ENCODE measurements at regions of chr14 and their contacts with region 1.

Region 1: DNA sequence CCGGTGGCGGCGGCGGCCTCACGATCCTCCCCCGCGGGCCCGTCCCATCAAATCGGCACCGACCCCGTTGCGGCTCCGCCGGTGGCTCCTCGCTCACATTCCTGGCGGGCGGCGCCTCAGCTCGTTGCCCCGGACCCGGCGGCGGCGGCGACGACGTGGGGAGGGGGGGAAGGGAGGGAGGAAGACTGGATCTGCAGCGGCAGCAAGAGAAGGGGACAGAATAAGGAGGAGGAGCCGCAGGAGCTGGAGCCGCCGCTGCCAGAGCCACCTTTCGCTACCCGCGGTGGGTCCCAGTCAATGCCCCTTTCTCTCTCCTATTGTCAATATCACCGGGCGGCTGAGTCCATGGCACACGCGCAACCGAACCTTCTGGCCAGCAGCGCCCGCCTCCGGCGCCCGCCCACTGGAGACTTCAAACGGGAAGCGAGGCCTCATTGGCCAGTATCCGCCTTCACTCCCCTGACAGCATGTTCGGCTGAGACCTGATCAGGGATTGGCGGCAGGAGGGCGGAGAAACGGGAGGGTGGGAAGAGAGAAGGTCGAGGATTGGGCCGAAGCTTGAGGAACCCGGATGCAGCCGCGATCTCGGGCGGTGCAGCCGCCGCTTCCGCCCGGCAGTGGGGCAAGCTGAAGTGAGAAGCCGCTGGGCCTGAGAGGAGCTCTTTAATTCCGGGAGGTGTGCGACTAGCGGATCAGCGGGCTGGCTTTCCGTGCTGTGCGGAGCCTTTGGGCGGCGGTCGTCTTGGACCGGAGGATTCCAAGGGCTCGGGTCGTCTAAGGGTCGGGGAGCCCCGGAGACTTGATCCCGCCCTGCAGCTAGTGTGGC is at the start of gene PPP2R5E:
- DNase-seq: peak; percentile 95 to 99 (median 97)
- ATAC-seq: peak; percentile 96
- H3K4me3 ChIP-seq: peak within 1 kb of the TSS; percentile 75 to 98
- H3K4me3 Mint-ChIP-seq: peak within 1 kb of the TSS; percentile 98
- H3K27ac ChIP-seq: peak within 1 kb of the TSS; percentile 71 to 91
- H3K27ac Mint-ChIP-seq: peak within 1 kb of the TSS; percentile 93
- H3K4me1 ChIP-seq: peaks cover 17% of the 10 kb centered on the region
- H3K4me1 Mint-ChIP-seq: peaks cover 33% of the 10 kb centered on the region
- H3K27me3 ChIP-seq: no peaks in the 10 kb centered on the region
- H3K27me3 Mint-ChIP-seq: no peaks in the 10 kb centered on the region
- CTCF ChIP-seq: no peak
- total RNA-seq, gene PPP2R5E: 33.5 to 35.9 TPM

Region 2: GRCh38 chr14:63478010-63478409 is 65.2 kb before region 1 on chr14:
- CTCF ChIA-PET with region 1: no interaction called
- POLR2A ChIA-PET with region 1: no interaction called
- intact Hi-C with region 1: loop called in 1 of 2 experiments (anchors 5 kb)
- DNase-seq: peak in 3 of 9 experiments; percentile 19 to 72 (median 54)
- ATAC-seq: peak; percentile 66
- H3K4me3 ChIP-seq: peak overlapping the region in 1 of 2 experiments; percentile 4
- H3K4me3 Mint-ChIP-seq: peak overlapping the region; percentile 59
- H3K27ac ChIP-seq: peak overlapping the region in 1 of 2 experiments; percentile 51
- H3K27ac Mint-ChIP-seq: peak overlapping the region; percentile 43
- H3K4me1 ChIP-seq: peaks cover 13% of the 10 kb centered on the region
- H3K4me1 Mint-ChIP-seq: peaks cover 55% of the 10 kb centered on the region
- H3K27me3 ChIP-seq: no peaks in the 10 kb centered on the region
- H3K27me3 Mint-ChIP-seq: no peaks in the 10 kb centered on the region
- CTCF ChIP-seq: no peak

Region 3: DNA sequence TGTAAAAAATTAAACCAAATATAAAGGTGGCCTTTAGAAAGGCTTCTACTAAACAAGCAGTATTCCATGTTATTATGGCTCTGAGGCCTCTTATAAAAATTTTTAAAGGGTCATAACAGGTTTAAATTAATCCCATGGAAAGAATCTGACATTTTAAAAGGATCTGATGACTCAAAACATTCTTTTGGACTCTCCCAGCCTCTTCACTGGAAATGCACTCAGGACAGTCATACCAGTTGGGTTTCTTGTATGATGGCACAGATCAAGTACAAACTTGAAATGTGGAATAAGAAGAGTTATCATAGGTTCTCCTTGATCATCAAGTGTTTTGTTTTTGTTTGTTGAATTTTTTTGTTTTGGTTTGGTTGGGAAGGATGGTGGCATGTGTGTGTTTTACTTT is 50.8 kb before region 1 on chr14:
- CTCF ChIA-PET with region 1: no interaction called
- POLR2A ChIA-PET with region 1: no interaction called
- intact Hi-C with region 1: no loop called
- DNase-seq: no peak
- ATAC-seq: no peak
- H3K4me3 ChIP-seq: no peak overlapping the region
- H3K4me3 Mint-ChIP-seq: no peak overlapping the region
- H3K27ac ChIP-seq: no peak overlapping the region
- H3K27ac Mint-ChIP-seq: peak overlapping the region; percentile 16
- H3K4me1 ChIP-seq: peaks cover 7% of the 10 kb centered on the region
- H3K4me1 Mint-ChIP-seq: peaks cover 44% of the 10 kb centered on the region
- H3K27me3 ChIP-seq: no peaks in the 10 kb centered on the region
- H3K27me3 Mint-ChIP-seq: no peaks in the 10 kb centered on the region
- CTCF ChIP-seq: no peak

Region 4: GRCh38 chr14:63641473-63642228 is 98.4 kb after region 1 on chr14 and contains the start of gene WDR89:
- CTCF ChIA-PET with region 1: no interaction called
- POLR2A ChIA-PET with region 1: interaction called, 15 read pairs
- intact Hi-C with region 1: loop called (anchors 1 to 2 kb)
- DNase-seq: peak; percentile 91 to 100 (median 94)
- ATAC-seq: peak; percentile 85
- H3K4me3 ChIP-seq: peak within 1 kb of the TSS; percentile 85 to 89
- H3K4me3 Mint-ChIP-seq: peak within 1 kb of the TSS; percentile 87
- H3K27ac ChIP-seq: peak within 1 kb of the TSS; percentile 94 to 99
- H3K27ac Mint-ChIP-seq: peak within 1 kb of the TSS; percentile 96
- H3K4me1 ChIP-seq: peaks cover 30% of the 10 kb centered on the region
- H3K4me1 Mint-ChIP-seq: peaks cover 57% of the 10 kb centered on the region
- H3K27me3 ChIP-seq: no peaks in the 10 kb centered on the region
- H3K27me3 Mint-ChIP-seq: no peaks in the 10 kb centered on the region
- CTCF ChIP-seq: peak; percentile 72
- total RNA-seq, gene WDR89: 13.6 to 13.7 TPM

Region 5: GRCh38 chr14:63663430-63664341 is 120.5 kb after region 1 on chr14:
- CTCF ChIA-PET with region 1: no interaction called
- POLR2A ChIA-PET with region 1: no interaction called
- intact Hi-C with region 1: no loop called
- DNase-seq: no peak
- ATAC-seq: no peak
- H3K4me3 ChIP-seq: no peak overlapping the region
- H3K4me3 Mint-ChIP-seq: no peak overlapping the region
- H3K27ac ChIP-seq: no peak overlapping the region
- H3K27ac Mint-ChIP-seq: no peak overlapping the region
- H3K4me1 ChIP-seq: no peaks in the 10 kb centered on the region
- H3K4me1 Mint-ChIP-seq: no peaks in the 10 kb centered on the region
- H3K27me3 ChIP-seq: no peaks in the 10 kb centered on the region
- H3K27me3 Mint-ChIP-seq: no peaks in the 10 kb centered on the region
- CTCF ChIP-seq: no peak

Region 6: GRCh38 chr14:63727774-63728728 is 184.8 kb after region 1 on chr14 and contains the start of gene SGPP1:
- CTCF ChIA-PET with region 1: no interaction called
- POLR2A ChIA-PET with region 1: interaction called, 4 read pairs
- intact Hi-C with region 1: loop called (anchors 1 to 5 kb)
- DNase-seq: peak; percentile 62 to 92 (median 78)
- ATAC-seq: peak; percentile 90
- H3K4me3 ChIP-seq: peak within 1 kb of the TSS; percentile 83 to 88
- H3K4me3 Mint-ChIP-seq: peak within 1 kb of the TSS; percentile 98
- H3K27ac ChIP-seq: peak within 1 kb of the TSS; percentile 72 to 82
- H3K27ac Mint-ChIP-seq: peak within 1 kb of the TSS; percentile 94
- H3K4me1 ChIP-seq: peaks cover 31% of the 10 kb centered on the region
- H3K4me1 Mint-ChIP-seq: peaks cover 44% of the 10 kb centered on the region
- H3K27me3 ChIP-seq: no peaks in the 10 kb centered on the region
- H3K27me3 Mint-ChIP-seq: no peaks in the 10 kb centered on the region
- CTCF ChIP-seq: no peak
- total RNA-seq, gene SGPP1: 15.9 to 16.5 TPM

Region 7: GRCh38 chr14:64387694-64388532 is 844.7 kb after region 1 on chr14 and contains the start of gene MTHFD1:
- CTCF ChIA-PET with region 1: no interaction called
- POLR2A ChIA-PET with region 1: no interaction called
- intact Hi-C with region 1: loop called (anchors 2 kb)
- DNase-seq: peak; percentile 88 to 98 (median 97)
- ATAC-seq: peak; percentile 84
- H3K4me3 ChIP-seq: peak within 1 kb of the TSS; percentile 79 to 80
- H3K4me3 Mint-ChIP-seq: peak within 1 kb of the TSS; percentile 99
- H3K27ac ChIP-seq: peak within 1 kb of the TSS; percentile 33 to 50
- H3K27ac Mint-ChIP-seq: peak within 1 kb of the TSS; percentile 95
- H3K4me1 ChIP-seq: peaks cover 20% of the 10 kb centered on the region
- H3K4me1 Mint-ChIP-seq: peaks cover 37% of the 10 kb centered on the region
- H3K27me3 ChIP-seq: no peaks in the 10 kb centered on the region
- H3K27me3 Mint-ChIP-seq: no peaks in the 10 kb centered on the region
- CTCF ChIP-seq: no peak
- total RNA-seq, gene MTHFD1: 14.4 to 15.6 TPM

Region 8: DNA sequence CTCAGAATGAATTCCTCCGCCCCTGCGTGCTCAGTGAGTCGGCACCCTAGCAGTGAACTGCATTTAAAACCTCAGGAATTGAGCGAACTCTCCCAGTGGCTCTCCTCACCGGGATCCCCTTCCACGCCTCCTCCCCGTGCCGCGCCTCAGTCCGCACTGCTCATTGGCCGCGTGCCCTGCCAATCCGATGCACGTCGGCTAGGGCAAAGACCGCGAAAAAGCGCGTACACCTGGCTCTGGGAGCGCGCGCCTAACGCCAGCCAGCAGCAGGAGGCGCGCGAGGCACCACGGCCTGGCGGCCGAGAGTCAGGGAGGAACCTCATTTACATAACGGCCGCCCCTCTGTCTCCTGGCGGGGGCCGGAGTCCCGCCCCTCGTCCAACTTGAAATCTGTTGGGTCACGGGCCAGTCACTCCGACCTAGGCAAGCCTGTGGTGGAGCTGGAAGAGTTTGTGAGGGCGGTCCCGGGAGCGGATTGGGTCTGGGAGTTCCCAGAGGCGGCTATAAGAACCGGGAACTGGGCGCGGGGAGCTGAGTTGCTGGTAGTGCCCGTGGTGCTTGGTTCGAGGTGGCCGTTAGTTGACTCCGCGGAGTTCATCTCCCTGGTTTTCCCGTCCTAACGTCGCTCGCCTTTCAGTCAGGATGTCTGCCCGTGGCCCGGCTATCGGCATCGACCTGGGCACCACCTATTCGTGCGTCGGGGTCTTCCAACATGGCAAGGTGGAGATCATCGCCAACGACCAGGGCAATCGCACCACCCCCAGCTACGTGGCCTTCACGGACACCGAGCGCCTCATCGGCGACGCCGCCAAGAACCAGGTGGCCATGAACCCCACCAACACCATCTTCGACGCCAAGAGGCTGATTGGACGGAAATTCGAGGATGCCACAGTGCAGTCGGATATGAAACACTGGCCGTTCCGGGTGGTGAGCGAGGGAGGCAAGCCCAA is 997.3 kb after region 1 on chr14 and contains the start of gene HSPA2:
- CTCF ChIA-PET with region 1: no interaction called
- POLR2A ChIA-PET with region 1: no interaction called
- intact Hi-C with region 1: loop called in 1 of 2 experiments (anchors 1 kb)
- DNase-seq: peak; percentile 85 to 98 (median 93)
- ATAC-seq: peak; percentile 87
- H3K4me3 ChIP-seq: peak within 1 kb of the TSS; percentile 83 to 90
- H3K4me3 Mint-ChIP-seq: peak within 1 kb of the TSS; percentile 96
- H3K27ac ChIP-seq: peak within 1 kb of the TSS; percentile 42 to 56
- H3K27ac Mint-ChIP-seq: peak within 1 kb of the TSS; percentile 84
- H3K4me1 ChIP-seq: peaks cover 19% of the 10 kb centered on the region
- H3K4me1 Mint-ChIP-seq: peaks cover 26% of the 10 kb centered on the region
- H3K27me3 ChIP-seq: no peaks in the 10 kb centered on the region
- H3K27me3 Mint-ChIP-seq: no peaks in the 10 kb centered on the region
- CTCF ChIP-seq: peak; percentile 63
- total RNA-seq, gene HSPA2: 2.1 to 2.6 TPM